PC-9 (cell line): ENCODE measurements at regions of chr6 and their contacts with region 1.

Region 1: DNA sequence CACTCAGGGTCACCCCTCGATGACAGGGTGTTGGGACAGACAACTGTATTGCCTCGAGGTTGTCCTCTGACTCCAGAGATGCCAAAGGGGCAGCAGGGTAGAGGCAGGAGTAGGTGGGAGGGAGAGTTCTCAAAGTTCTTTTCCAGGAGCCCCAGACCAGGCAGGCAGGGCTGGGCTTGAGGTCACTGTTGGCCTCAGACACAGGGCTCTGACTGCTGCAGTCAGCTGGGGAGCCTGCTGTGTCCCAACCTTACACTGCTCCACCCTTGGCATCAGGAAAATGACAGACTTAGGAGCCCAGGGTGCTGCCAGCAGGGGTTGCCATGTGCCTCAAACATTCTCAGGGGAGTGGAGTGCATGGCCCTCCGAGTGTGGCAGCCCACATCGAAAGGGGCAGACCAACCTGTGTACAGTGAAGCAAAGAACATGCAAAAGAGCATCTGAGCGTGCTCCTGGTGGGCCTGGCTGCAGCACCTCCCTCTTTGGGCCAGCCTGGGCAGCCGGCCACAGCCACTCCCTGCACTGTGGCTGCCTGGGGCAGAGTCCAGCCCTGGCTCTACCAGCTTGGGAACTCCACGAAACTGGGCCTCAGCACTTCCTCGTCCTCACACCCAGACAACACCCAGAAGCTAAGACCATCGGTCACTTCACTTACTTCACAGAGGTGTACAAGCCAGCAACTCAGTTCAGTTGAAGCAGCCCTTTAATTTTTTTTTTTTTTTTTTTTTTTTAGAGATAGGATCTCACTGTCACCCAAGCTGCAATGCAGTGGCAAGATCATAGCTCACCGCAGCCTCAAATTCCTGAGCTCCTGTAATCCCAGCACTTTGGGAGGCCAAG is 24.0 kb downstream of the C6orf132 start:
- DNase-seq: peak; percentile 95 to 99
- H3K4me3 ChIP-seq: no peak overlapping the region
- H3K27ac ChIP-seq: peak overlapping the region; percentile 94
- H3K4me1 ChIP-seq: peaks cover 88% of the 10 kb centered on the region
- H3K27me3 ChIP-seq: no peaks in the 10 kb centered on the region
- CTCF ChIP-seq: no peak

Region 2: GRCh38 chr6:41941280-41942066 is 176.9 kb before region 1 on chr6 and contains the start of gene CCND3:
- CTCF ChIA-PET with region 1: no interaction called
- POLR2A ChIA-PET with region 1: interaction called, 18 read pairs
- intact Hi-C with region 1: no loop called
- DNase-seq: peak; percentile 69 to 89
- H3K4me3 ChIP-seq: peak within 1 kb of the TSS; percentile 78
- H3K27ac ChIP-seq: peak within 1 kb of the TSS; percentile 72
- H3K4me1 ChIP-seq: peaks cover 27% of the 10 kb centered on the region
- H3K27me3 ChIP-seq: no peaks in the 10 kb centered on the region
- CTCF ChIP-seq: no peak
- total RNA-seq, gene CCND3: 70.5 and 75.1 TPM in 2 replicates

Region 3: GRCh38 chr6:42059743-42060142 is 58.6 kb before region 1 on chr6:
- CTCF ChIA-PET with region 1: no interaction called
- POLR2A ChIA-PET with region 1: no interaction called
- intact Hi-C with region 1: no loop called
- DNase-seq: no peak
- H3K4me3 ChIP-seq: no peak overlapping the region
- H3K27ac ChIP-seq: no peak overlapping the region
- H3K4me1 ChIP-seq: no peaks in the 10 kb centered on the region
- H3K27me3 ChIP-seq: no peaks in the 10 kb centered on the region
- CTCF ChIP-seq: no peak

Region 4: GRCh38 chr6:42075159-42075838 is 43.1 kb before region 1 on chr6:
- CTCF ChIA-PET with region 1: no interaction called
- POLR2A ChIA-PET with region 1: no interaction called
- intact Hi-C with region 1: loop called (anchors 1 kb)
- DNase-seq: peak; percentile 72 to 87
- H3K4me3 ChIP-seq: no peak overlapping the region
- H3K27ac ChIP-seq: no peak overlapping the region
- H3K4me1 ChIP-seq: 0 out of 2 replicates have a peak, but pooled peaks cover 4% of the 10 kb centered on the region
- H3K27me3 ChIP-seq: no peaks in the 10 kb centered on the region
- CTCF ChIP-seq: peak; percentile 95

Region 5: GRCh38 chr6:42136508-42137193 is 18.3 kb after region 1 on chr6:
- CTCF ChIA-PET with region 1: interaction called, 7 read pairs
- POLR2A ChIA-PET with region 1: interaction called, 55 read pairs
- intact Hi-C with region 1: loop called (anchors 1 kb)
- DNase-seq: peak in 1 of 2 experiments; percentile 94
- H3K4me3 ChIP-seq: peak overlapping the region; percentile 43; the same call in 1 of the 2 replicates
- H3K27ac ChIP-seq: peak overlapping the region; percentile 98
- H3K4me1 ChIP-seq: peaks cover 77% of the 10 kb centered on the region
- H3K27me3 ChIP-seq: no peaks in the 10 kb centered on the region
- CTCF ChIP-seq: no peak

Region 6: DNA sequence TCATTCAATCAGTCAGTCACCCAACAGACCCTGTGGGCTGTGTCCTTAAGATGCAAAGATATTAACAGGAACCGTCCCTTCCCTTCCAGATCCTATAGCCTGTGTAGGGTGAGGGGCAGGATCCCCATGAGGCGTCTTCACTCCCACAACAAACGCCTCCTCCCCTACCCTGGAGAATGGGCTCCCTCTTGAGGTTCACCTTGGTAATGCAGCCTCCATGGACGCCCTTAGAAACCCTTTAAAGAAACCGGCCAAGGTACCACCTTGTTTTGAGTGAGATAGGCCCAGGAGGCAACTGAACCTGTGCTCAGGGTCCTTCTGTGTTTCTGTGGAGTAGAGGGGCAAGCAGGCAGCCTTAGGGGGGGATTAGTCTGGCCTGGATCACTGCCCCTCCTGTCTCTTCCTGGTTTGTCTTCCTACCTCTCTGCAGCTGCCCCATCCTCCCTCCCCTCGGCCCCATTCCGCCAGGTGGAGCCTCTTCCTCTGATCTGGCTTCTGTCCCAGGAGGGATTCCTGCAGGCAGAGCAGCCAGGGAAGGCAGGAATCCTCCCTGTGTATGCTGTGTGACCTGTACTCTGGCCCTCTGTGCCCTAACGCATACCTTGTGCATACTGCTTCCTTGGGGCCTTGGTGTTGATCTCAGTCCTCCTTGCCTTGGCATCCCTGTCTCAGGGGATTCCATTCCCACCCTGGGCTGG is 48.2 kb after region 1 on chr6:
- CTCF ChIA-PET with region 1: interaction called, 8 read pairs
- POLR2A ChIA-PET with region 1: interaction called, 3 read pairs
- intact Hi-C with region 1: loop called (anchors 2 kb)
- DNase-seq: peak; percentile 67 to 83
- H3K4me3 ChIP-seq: no peak overlapping the region
- H3K27ac ChIP-seq: no peak overlapping the region
- H3K4me1 ChIP-seq: 0 out of 2 replicates have a peak, but pooled peaks cover 7% of the 10 kb centered on the region
- H3K27me3 ChIP-seq: no peaks in the 10 kb centered on the region
- CTCF ChIP-seq: peak; percentile 100